ENCODE measurements at regions of chr1 and their contacts with region 1.

Region 1: GRCh38 chr1:30779294-30780071 is 21.9 kb upstream of the LAPTM5 start:
- DNase-seq: peak; percentile 85
- ATAC-seq: peak; percentile 72
- H3K4me3 ChIP-seq: no peak overlapping the region
- H3K27ac ChIP-seq: no peak overlapping the region
- H3K4me1 ChIP-seq: peaks cover 7% of the 10 kb centered on the region; the same call in 1 of the 2 replicates
- H3K27me3 ChIP-seq: no peaks in the 10 kb centered on the region
- CTCF ChIP-seq: peak; percentile 94

Region 2: GRCh38 chr1:30657759-30658253 is 121.7 kb before region 1 on chr1:
- CTCF ChIA-PET with region 1: no interaction called
- POLR2A ChIA-PET with region 1: no interaction called
- intact Hi-C with region 1: no loop called
- DNase-seq: peak; percentile 59
- ATAC-seq: peak; percentile 88
- H3K4me3 ChIP-seq: no peak overlapping the region
- H3K27ac ChIP-seq: no peak overlapping the region
- H3K4me1 ChIP-seq: peaks cover 10% of the 10 kb centered on the region
- H3K27me3 ChIP-seq: no peaks in the 10 kb centered on the region
- CTCF ChIP-seq: no peak

Region 3: DNA sequence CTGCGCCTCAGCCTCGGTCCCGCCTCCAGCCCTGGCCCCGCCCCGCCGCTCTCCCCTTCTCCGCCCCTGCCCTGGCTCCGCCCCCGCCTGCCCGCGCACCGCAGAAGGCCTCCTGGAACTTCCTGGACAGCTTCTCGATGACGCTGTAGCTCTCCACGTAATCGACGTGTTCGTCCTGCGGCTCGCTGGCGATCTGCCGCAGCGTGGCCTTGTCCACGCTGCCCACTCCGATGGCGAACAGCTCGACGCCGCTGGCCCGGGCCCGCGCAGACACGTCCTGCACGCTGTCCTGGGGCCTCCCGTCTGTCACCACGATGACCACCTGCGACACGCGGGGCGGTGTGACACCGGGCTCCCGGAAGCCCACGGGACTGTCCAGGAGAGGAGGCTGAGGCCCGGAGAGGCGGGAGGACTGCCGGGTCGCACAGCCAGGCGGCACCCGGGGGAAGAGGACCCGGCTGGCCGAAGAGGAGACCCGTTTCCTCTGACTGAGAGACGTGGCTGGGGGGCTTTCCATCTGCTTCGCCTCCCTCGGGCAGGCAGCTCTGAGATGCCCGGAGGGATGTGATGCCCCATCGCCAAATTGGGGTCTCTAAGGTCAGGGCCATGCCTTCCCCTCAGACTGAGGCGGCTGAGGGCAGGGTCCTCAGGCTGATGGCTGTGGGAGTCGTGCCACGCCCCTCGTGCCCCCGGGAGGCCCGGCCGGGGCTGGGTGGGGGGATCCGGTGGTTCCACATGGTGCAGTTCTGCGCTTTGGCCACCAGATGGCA is 60.7 kb before region 1 on chr1:
- CTCF ChIA-PET with region 1: interaction called, 67 read pairs
- POLR2A ChIA-PET with region 1: interaction called, 8 read pairs
- intact Hi-C with region 1: no loop called
- DNase-seq: no peak
- ATAC-seq: peak; percentile 71
- H3K4me3 ChIP-seq: peak overlapping the region; percentile 67
- H3K27ac ChIP-seq: peak overlapping the region; percentile 81
- H3K4me1 ChIP-seq: peaks cover 10% of the 10 kb centered on the region
- H3K27me3 ChIP-seq: no peaks in the 10 kb centered on the region
- CTCF ChIP-seq: peak; percentile 96

Region 4: DNA sequence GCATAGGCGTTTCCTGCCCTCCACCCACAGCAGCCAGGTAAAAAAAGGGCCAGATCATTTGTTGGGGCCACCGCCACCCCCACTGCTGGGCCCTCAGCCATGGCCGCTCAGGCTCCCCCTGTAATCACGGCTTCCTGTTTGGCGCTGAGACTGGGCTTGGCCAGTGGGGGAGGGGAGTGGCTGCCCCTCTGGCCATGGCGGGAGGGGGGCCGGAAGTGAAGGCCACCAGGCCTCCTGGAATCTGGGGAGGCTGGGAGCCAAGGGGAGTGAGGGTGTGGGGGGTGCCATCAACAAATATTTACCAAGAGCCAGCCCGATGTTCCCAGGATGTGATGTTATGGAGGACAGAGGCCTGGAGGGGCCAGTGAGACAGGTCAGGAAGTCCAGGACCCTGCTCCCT is 122.7 kb after region 1 on chr1:
- CTCF ChIA-PET with region 1: no interaction called
- POLR2A ChIA-PET with region 1: no interaction called
- intact Hi-C with region 1: no loop called
- DNase-seq: no peak
- ATAC-seq: peak; percentile 11; the same call in 1 of the 2 replicates
- H3K4me3 ChIP-seq: no peak overlapping the region
- H3K27ac ChIP-seq: no peak overlapping the region
- H3K4me1 ChIP-seq: peaks cover 6% of the 10 kb centered on the region
- H3K27me3 ChIP-seq: no peaks in the 10 kb centered on the region
- CTCF ChIP-seq: no peak